ENCODE measurements at regions of chr10 and their contacts with region 1.

Region 1: DNA sequence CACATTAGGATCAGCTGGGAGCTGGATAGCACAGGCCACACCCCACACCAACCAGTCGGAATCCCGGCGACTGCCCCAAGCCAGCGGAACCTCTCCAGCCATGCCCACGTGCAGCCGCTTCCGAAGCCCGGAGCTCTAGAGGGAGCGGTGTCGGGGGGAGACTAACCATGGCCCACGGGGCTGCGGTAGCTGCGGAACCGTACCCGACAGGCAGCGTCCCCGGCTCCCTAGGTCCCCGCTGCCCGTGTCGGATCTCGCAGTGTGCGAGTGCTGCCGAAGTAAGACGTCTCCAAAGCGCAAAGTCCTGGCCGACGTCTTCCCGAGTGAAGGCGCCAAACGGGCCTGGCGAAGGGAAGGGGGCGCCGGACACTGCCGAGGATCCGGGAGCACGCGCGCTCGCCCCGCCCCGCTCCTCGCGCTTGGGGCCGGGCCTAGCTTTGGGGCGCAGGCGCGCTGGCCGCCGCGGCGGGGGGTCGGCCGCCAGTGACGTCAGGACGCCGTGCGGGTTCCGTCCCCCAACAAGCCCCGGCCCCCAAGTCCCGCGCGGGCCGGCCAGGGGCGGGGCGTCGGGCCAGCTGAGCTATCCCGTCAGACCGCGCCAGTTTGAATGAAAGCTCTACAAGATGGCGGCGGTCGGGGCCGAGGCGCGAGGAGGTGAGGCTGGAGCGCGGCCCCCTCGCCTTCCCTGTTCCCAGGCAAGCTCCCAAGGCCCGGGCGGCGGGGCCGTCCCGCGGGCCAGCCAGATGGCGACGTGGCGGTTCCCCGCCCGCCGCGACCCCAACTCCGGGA is at the start of gene SUV39H2:
- DNase-seq: peak; percentile 93
- H3K4me3 ChIP-seq: peak within 1 kb of the TSS; percentile 77 to 96 (median 93)
- H3K27ac ChIP-seq: peak within 1 kb of the TSS; percentile 89
- H3K4me1 ChIP-seq: peaks cover 16% of the 10 kb centered on the region
- H3K27me3 ChIP-seq: no peaks in the 10 kb centered on the region
- CTCF ChIP-seq: peak in 1 of 2 donors; percentile 2
- total RNA-seq, gene SUV39H2: 8.5 to 17.2 TPM

Region 2: GRCh38 chr10:14837757-14838581 is 40.5 kb before region 1 on chr10 and contains the starts of genes CDNF, HSPA14 and MSANTD7:
- CTCF ChIA-PET with region 1: no interaction called
- dilution Hi-C with region 1: no loop called
- in situ Hi-C with region 1: no loop called
- intact Hi-C with region 1: loop called (anchors 1 kb)
- DNase-seq: peak; percentile 99
- H3K4me3 ChIP-seq: peak within 1 kb of the TSS; percentile 72 to 90 (median 81)
- H3K27ac ChIP-seq: peak within 1 kb of the TSS; percentile 90
- H3K4me1 ChIP-seq: peaks cover 8% of the 10 kb centered on the region
- H3K27me3 ChIP-seq: no peaks in the 10 kb centered on the region
- CTCF ChIP-seq: no peak
- total RNA-seq, gene CDNF: 0.83 to 1.5 TPM
- total RNA-seq, gene HSPA14: 11.5 to 20.2 TPM
- total RNA-seq, gene MSANTD7: 15.1 to 20.5 TPM

Measured in mammary epithelial cell (primary cell).